A549 (cell line): ENCODE measurements at regions of chrX and their contacts with region 1.

Region 1: DNA sequence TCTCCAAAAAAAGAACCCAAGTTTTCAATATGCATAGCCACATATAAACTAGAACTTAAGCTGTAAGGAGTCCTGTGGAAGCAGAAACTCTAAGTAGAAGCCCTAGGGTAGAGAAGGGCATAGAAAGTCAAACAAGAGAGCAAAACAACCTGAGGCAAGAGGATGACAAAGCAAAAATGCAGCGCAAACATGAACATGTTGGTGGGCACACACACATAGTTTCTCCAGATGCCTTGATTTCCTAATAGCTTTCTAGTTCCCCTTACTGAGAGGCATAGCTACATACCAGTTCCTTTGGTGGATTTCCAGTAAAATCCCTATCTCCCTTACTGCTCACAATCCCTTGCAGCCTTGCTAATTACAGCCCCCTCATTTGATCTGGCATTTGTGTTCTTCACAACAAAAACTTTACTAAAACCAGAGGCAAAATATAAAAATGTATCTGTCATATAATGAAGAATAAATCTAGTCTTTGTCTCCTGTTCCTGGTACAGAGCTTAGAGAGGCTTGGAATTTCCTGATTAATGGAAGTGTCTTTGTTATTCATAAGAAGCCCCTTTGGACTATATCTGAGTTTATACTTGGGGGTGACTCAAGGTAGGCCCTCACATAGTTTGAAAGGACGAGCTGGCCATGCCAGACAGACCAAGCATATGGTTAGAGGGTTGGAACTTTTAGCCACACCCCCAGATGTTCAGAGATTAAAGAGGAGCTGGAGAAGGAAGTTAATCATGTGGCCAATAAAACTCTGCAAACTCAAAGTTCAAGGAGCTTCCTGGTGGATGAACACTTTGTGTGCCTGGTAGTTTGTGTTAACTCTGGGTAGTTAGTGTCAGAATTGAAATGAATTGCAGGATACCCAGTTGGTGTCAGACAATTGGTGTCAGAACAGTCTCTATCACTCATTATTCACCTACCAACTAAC is 52.7 kb upstream of the ZCCHC13 start:
- DNase-seq: peak; percentile 28 to 78
- ATAC-seq: peak; percentile 74 to 82
- H3K4me3 ChIP-seq: no peak overlapping the region
- H3K27ac ChIP-seq: peak overlapping the region; percentile 91 to 93
- H3K4me1 ChIP-seq: peaks cover 85% of the 10 kb centered on the region
- CTCF ChIP-seq: no peak
- EP300 ChIP-seq: peak; percentile 28 to 35; a peak in 3 of 5 replicates
- POLR2A ChIP-seq: no peak
- RAD21 ChIP-seq: no peak

Region 2: DNA sequence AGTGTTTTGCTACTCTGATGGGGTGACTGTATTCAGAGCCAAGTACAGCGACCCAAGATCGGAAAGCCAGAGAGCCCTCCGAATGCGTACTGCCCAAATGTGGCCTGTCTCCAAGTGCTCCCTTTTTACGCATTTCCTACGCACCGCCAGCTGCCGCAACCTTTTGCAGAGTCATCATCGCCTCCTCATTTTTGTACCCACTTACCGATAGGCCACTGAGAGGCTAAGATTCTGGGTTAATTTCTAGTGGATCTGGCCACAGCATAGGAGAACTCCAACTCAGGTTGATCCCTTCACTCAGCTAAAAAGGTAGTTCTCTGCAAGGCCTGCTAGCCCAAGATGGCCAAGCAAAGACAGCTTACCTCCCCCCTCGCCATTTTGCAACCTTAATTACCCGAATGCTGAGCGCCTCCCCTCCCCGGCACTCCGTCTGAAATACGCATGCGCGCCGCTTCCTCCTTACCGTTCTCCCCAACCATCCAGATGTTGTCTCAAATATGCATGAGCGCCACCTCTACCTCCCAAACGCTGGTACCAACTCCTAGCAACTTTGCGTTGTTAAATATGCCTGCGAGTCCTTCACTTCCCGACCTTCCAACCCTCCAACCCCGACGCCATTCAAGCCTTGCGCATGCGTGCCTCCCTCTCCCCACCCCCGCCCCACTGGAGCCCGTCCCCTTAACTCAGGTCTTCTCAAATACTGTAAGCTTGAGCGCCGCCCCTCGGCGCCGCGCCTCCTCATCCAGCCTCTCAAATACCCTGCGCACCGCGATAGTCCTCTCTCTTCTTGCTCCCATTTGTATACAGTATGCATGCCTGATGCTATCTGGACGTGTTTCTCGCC is 40.9 kb after region 1 on chrX:
- CTCF ChIA-PET with region 1: interaction called, 3 read pairs
- POLR2A ChIA-PET with region 1: interaction called, 10 read pairs
- DNase-seq: peak; percentile 77 to 95
- ATAC-seq: peak; percentile 95 to 96
- H3K4me3 ChIP-seq: peak overlapping the region; percentile 66
- H3K27ac ChIP-seq: peak overlapping the region; percentile 95 to 99
- H3K4me1 ChIP-seq: no peaks in the 10 kb centered on the region; the same call in 2 of the 3 replicates
- CTCF ChIP-seq: peak; percentile 17; the same call in 1 of the 3 replicates
- EP300 ChIP-seq: no peak
- POLR2A ChIP-seq: peak; percentile 75
- RAD21 ChIP-seq: peak; percentile 25 to 43; a peak in 3 of 5 replicates